A673 (cell line): ENCODE measurements at regions of chr3 and their contacts with region 1.

Region 1: GRCh38 chr3:14774431-14774830 is 44.3 kb upstream of the FGD5 start:
- DNase-seq: no peak
- H3K4me3 ChIP-seq: no peak overlapping the region
- H3K27ac ChIP-seq: no peak overlapping the region
- H3K4me1 ChIP-seq: no peaks in the 10 kb centered on the region
- H3K27me3 ChIP-seq: no peaks in the 10 kb centered on the region
- CTCF ChIP-seq: no peak

Region 2: GRCh38 chr3:14678015-14678503 is 96.4 kb before region 1 on chr3:
- CTCF ChIA-PET with region 1: no interaction called
- POLR2A ChIA-PET with region 1: no interaction called
- intact Hi-C with region 1: loop called (anchors 10 kb)
- DNase-seq: no peak
- H3K4me3 ChIP-seq: no peak overlapping the region
- H3K27ac ChIP-seq: no peak overlapping the region
- H3K4me1 ChIP-seq: no peaks in the 10 kb centered on the region
- H3K27me3 ChIP-seq: no peaks in the 10 kb centered on the region
- CTCF ChIP-seq: no peak